ENCODE measurements at regions of chr7 and their contacts with region 1.

Region 1: DNA sequence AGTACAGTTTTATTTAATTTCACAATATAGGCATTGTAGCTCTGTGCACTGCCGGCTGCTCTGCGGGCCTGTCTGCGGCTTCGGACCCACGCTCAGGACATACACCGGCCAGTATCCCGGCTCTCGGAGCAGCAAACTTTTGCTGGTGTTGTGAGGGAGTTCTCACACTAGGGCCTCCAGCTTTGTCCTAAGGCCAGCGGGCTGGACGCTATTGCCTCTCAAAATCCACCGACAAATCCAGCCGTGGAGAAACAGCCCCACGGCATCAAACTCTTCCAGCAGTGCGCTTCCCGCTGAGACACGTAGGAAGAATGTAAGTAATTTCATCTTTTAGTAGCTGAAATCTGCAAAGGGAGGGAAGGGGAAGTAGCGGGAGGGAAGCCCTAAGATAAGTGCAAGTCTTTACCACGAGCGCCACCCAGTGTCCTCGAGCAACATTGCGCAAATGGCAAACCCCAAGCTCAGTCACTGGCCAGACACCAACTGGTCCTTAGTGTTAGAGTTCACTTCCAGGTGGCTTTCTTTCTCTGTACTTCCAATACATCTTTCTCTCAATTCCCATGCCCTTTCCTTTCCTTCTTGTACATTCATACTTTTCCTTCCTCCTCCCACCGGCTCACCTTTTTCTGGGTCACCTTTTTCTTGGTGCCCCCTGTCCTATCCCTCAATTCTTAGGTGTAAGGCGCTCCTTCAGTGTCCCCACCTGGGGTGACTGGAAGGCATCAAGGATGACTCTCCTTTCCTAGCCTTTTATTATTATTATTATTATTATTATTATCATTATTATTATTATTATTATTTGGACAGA is 3.0 kb upstream of the DLX5 start:
- DNase-seq: peak; percentile 83

Region 2: GRCh38 chr7:95916573-95917297 is 1110.9 kb before region 1 on chr7:
- in situ Hi-C with region 1: loop called (anchors 25 kb)
- DNase-seq: peak; percentile 75